K562 (cell line): ENCODE measurements at regions of chr2 and their contacts with region 1.

Region 1: DNA sequence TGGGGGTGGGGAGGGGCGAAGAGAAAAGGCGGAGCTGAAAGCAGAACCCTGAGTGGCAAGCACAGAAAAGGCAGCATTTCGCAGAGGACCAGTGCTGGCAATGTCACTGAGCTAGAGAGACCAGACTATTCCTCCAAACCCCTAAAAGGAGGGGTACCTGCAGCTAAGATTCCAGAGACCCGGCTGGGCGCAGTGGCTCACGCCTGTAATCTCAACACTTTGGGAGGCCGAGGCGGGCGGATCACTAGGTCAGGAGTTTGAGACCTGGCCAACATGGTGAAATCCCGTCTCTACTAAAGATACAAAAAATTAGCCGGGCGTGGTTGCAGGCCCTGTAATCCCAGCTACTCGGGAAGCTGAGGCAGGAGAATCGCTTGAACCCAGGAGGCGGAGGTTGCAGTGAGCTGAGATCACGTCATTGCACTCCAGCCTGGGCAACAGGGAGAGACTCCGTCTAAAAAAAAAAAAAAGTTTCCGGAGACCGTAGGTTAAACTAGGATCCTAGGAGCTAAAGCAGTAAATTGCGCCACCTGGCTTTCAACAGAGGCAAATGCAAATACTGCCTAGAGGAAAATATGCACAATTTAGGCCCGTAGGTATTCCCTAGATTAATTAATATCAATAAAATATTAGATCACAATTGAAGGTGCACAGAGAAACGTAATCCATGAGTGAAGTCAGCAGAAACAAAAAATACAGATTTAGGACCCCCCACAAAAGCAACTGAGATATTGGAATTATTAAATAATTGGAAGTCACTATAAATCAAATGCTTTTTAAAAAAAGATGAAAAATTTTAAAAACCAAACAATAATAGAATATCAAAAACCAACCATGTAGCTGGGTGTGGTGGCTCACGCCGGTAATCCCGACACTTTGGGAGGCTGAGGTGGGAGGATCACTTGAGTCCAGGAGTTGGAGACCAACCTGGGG is 4.9 kb downstream of the UCN start:
- DNase-seq: peak; percentile 69 to 82 (median 75)
- ATAC-seq: peak; percentile 87
- H3K4me3 ChIP-seq: peak overlapping the region; percentile 26
- H3K27ac ChIP-seq: no peak overlapping the region
- H3K4me1 ChIP-seq: peaks cover 0 to 10% of the 10 kb centered on the region in 2 experiments; a peak in 3 of 5 replicates
- H3K27me3 ChIP-seq: no peaks in the 10 kb centered on the region
- CTCF ChIP-seq: peak; percentile 80 to 93 (median 85)
- EP300 ChIP-seq: no peak
- POLR2A ChIP-seq: no peak
- RAD21 ChIP-seq: peak; percentile 80 to 85

Region 2: DNA sequence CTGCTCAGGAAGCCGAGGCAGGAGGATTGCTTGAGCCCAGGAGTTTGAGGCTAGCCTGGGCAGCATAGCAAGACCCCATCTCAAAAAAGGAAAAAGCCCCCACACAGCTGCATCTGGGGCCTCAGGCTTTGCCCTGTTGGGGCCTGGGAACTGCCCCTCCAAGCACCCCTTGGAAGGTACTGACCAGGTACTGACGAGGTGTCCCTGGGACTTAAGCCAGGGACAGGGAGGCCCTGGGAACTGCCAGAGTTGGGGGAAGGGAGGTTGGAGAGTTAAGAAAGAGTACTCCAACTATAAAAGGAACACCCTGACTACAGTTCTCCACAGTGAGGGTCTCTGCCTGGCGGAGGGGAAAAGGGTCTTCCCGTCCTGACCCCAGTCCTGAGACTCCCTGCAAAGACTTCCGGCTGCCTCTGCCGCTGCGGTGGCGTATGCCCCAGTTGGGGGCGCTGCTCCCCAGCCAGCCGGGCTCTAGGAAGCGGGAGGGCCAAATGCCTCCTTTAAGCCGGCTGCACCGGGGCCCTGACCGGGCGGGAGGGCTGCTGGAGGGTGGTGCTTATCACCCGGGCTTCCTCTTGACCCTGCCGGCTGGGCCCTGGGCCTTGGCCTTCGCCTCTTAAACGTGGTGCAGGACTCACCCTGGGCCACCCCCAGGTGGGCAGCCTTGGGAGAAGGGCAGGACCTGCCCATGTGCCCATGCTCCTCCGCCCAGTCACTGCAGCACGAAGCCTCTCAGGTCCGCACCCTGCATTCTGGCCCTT is 53.3 kb before region 1 on chr2:
- CTCF ChIA-PET with region 1: interaction called, 23 read pairs
- POLR2A ChIA-PET with region 1: no interaction called
- in situ Hi-C with region 1: no loop called
- intact Hi-C with region 1: loop called (anchors 1 kb)
- DNase-seq: peak; percentile 84 to 91 (median 88)
- ATAC-seq: peak; percentile 96
- H3K4me3 ChIP-seq: no peak overlapping the region
- H3K27ac ChIP-seq: peak overlapping the region; percentile 56; the same call in 2 of the 3 replicates
- H3K4me1 ChIP-seq: peaks cover 9 to 23% of the 10 kb centered on the region in 2 experiments
- H3K27me3 ChIP-seq: no peaks in the 10 kb centered on the region
- CTCF ChIP-seq: peak; percentile 96 to 98 (median 97)
- EP300 ChIP-seq: 0 out of 2 replicates have a peak, but pooled peaks have one; percentile 13
- POLR2A ChIP-seq: no peak
- RAD21 ChIP-seq: peak; percentile 98 to 99

Region 3: GRCh38 chr2:27400348-27401135 is 97.2 kb after region 1 on chr2:
- CTCF ChIA-PET with region 1: no interaction called
- POLR2A ChIA-PET with region 1: no interaction called
- in situ Hi-C with region 1: no loop called
- intact Hi-C with region 1: no loop called
- DNase-seq: peak in 1 of 4 experiments; percentile 9
- ATAC-seq: peak; percentile 31; the same call in 2 of the 3 replicates
- H3K4me3 ChIP-seq: no peak overlapping the region
- H3K27ac ChIP-seq: no peak overlapping the region
- H3K4me1 ChIP-seq: no peaks in the 10 kb centered on the region; a peak in 2 of 5 replicates
- H3K27me3 ChIP-seq: no peaks in the 10 kb centered on the region
- CTCF ChIP-seq: no peak
- EP300 ChIP-seq: no peak
- POLR2A ChIP-seq: no peak
- RAD21 ChIP-seq: no peak

Region 4: GRCh38 chr2:27501042-27501441 is 197.7 kb after region 1 on chr2:
- CTCF ChIA-PET with region 1: no interaction called
- POLR2A ChIA-PET with region 1: no interaction called
- in situ Hi-C with region 1: no loop called
- intact Hi-C with region 1: no loop called
- DNase-seq: no peak
- ATAC-seq: no peak
- H3K4me3 ChIP-seq: no peak overlapping the region
- H3K27ac ChIP-seq: no peak overlapping the region
- H3K4me1 ChIP-seq: peaks cover 6 to 13% of the 10 kb centered on the region in 2 experiments; a peak in 3 of 5 replicates
- H3K27me3 ChIP-seq: no peaks in the 10 kb centered on the region; a peak in 1 of 5 replicates
- CTCF ChIP-seq: no peak
- EP300 ChIP-seq: no peak
- POLR2A ChIP-seq: no peak
- RAD21 ChIP-seq: no peak